HepG2 (cell line): ENCODE measurements at regions of chr20 and their contacts with region 1.

Region 1: GRCh38 chr20:31738729-31739561 is at the start of gene TPX2:
- DNase-seq: peak; percentile 99
- ATAC-seq: peak; percentile 99
- H3K4me3 ChIP-seq: peak within 1 kb of the TSS; percentile 90 to 97 (median 93)
- H3K27ac ChIP-seq: peak within 1 kb of the TSS; percentile 84
- H3K4me1 ChIP-seq: peaks cover 34% of the 10 kb centered on the region
- H3K27me3 ChIP-seq: peaks cover 0 to 3% of the 10 kb centered on the region in 2 experiments; a peak in 2 of 5 replicates
- CTCF ChIP-seq: peak; percentile 68
- EP300 ChIP-seq: no peak; a peak in 1 of 4 replicates
- POLR2A ChIP-seq: peak; percentile 87 to 95
- RAD21 ChIP-seq: peak; percentile 76
- total RNA-seq, gene TPX2: 124 and 190 TPM in 2 replicates

Region 2: DNA sequence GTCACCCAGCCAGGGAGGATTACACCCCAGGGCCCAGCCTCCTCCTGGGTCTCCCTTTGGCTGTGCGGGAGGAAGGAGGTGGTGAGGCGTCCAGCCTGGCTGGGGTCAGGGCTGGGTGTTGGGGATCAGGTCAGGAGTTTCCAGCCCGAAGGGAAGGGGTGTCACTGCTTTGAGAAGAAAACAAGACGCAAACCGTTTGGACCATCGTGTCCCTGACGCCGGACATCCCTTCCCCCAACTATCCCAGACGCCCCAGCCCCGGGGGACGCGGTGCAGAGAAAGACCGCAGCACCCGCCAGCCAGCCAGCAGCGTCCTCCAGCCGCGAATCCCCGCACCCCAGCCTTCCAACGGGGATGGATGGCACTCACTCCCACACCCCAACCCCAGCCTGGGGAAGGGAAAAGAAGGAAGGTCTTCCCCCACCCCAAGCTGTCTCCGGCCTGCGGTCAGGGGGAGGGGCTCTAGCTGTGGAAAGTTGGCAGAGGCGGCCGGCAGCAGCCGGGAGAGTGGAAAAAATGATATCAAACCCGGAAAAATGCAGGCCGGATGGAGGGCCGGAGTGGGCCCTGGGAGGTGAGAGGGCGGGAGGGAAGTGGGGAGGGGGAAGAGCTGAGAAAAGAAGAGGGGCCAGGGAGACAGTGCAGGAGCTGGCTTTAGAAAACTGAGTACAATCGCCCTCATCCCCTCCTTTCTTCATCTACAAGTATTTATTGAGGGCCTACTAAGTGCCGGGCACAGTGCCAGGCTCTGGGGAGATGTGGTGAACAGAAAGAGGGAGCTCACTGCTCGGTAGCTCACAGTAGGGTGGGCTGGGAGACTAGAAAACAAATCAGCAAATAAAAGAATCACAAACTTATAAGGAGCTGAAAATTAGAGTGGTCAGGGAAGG is 253.2 kb before region 1 on chr20:
- CTCF ChIA-PET with region 1: no interaction called
- POLR2A ChIA-PET with region 1: no interaction called
- in situ Hi-C with region 1: no loop called
- intact Hi-C with region 1: no loop called
- DNase-seq: no peak
- ATAC-seq: peak; percentile 22
- H3K4me3 ChIP-seq: no peak overlapping the region; a peak in 1 of 6 replicates
- H3K27ac ChIP-seq: no peak overlapping the region
- H3K4me1 ChIP-seq: no peaks in the 10 kb centered on the region
- H3K27me3 ChIP-seq: peaks cover 3 to 30% of the 10 kb centered on the region in 2 experiments; a peak in 3 of 5 replicates
- CTCF ChIP-seq: no peak
- EP300 ChIP-seq: no peak
- POLR2A ChIP-seq: no peak
- RAD21 ChIP-seq: no peak

Region 3: GRCh38 chr20:31674895-31675827 is 63.8 kb before region 1 on chr20:
- CTCF ChIA-PET with region 1: no interaction called
- POLR2A ChIA-PET with region 1: interaction called, 10 read pairs
- in situ Hi-C with region 1: no loop called
- intact Hi-C with region 1: no loop called
- DNase-seq: no peak
- ATAC-seq: no peak
- H3K4me3 ChIP-seq: no peak overlapping the region
- H3K27ac ChIP-seq: peak overlapping the region; percentile 0
- H3K4me1 ChIP-seq: peaks cover 81% of the 10 kb centered on the region
- H3K27me3 ChIP-seq: no peaks in the 10 kb centered on the region
- CTCF ChIP-seq: no peak
- EP300 ChIP-seq: no peak
- POLR2A ChIP-seq: no peak; a peak in 1 of 4 replicates
- RAD21 ChIP-seq: no peak

Region 4: DNA sequence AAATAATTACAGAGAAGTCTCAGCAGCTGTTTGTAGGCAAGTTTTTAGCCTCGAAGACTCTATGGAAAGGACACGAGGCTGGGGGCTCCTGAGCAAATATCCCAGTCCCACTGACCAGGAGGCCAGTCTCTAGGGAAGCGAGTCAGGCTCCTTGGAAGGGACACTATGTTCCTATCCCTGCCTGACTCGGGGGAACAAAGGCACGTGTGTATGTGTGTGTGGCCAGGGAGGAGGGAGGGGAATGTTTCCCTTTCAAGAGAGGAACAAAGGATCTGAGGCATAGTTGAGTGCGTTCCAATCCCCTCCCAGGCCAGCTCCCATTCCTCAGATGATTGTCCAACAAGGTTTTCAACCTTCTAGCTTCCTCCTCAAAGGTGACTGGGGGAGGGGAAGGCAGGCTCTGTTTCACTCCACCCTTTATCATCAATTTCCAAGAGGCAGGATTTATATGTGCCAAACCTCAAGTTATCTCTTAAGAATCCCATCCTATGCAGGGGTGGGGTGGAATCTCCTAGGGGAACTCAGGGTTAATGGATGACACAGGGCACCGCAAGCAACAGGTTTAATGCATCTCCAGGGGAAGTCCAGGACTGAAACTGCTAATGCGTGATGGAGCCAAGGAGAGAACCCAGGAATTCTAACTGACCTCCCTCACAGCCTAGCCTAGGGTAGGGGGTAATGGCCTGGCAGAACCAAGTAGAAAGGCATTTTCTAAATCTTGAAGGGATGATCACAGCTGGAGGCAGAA is 26.2 kb before region 1 on chr20:
- CTCF ChIA-PET with region 1: no interaction called
- POLR2A ChIA-PET with region 1: interaction called, 15 read pairs
- in situ Hi-C with region 1: no loop called
- intact Hi-C with region 1: no loop called
- DNase-seq: peak; percentile 95
- ATAC-seq: peak; percentile 61
- H3K4me3 ChIP-seq: peak overlapping the region in 2 of 3 experiments; percentile 2 to 29; a peak in 2 of 6 replicates
- H3K27ac ChIP-seq: peak overlapping the region; percentile 61
- H3K4me1 ChIP-seq: peaks cover 99% of the 10 kb centered on the region
- H3K27me3 ChIP-seq: no peaks in the 10 kb centered on the region
- CTCF ChIP-seq: no peak
- EP300 ChIP-seq: peak in 1 of 2 experiments; percentile 92; a peak in 3 of 4 replicates
- POLR2A ChIP-seq: peak in 1 of 2 experiments; percentile 39; a peak in 1 of 4 replicates
- RAD21 ChIP-seq: no peak

Region 5: GRCh38 chr20:31811796-31812728 is 73.1 kb after region 1 on chr20:
- CTCF ChIA-PET with region 1: no interaction called
- POLR2A ChIA-PET with region 1: no interaction called
- in situ Hi-C with region 1: no loop called
- intact Hi-C with region 1: no loop called
- DNase-seq: no peak
- ATAC-seq: no peak
- H3K4me3 ChIP-seq: no peak overlapping the region
- H3K27ac ChIP-seq: no peak overlapping the region
- H3K4me1 ChIP-seq: no peaks in the 10 kb centered on the region
- H3K27me3 ChIP-seq: no peaks in the 10 kb centered on the region
- CTCF ChIP-seq: no peak
- EP300 ChIP-seq: no peak
- POLR2A ChIP-seq: no peak
- RAD21 ChIP-seq: no peak